ENCODE measurements at regions of chr7 and their contacts with region 1.

Region 1: GRCh38 chr7:139422126-139422525 is 61.3 kb downstream of the KLRG2 start:
- DNase-seq: no peak
- ATAC-seq: peak in 2 of 4 donors; percentile 43 to 51
- H3K4me3 ChIP-seq: no peak overlapping the region
- H3K27ac ChIP-seq: peak overlapping the region in 4 of 12 donors; percentile 17 to 78 (median 29)
- H3K4me1 ChIP-seq: peaks cover 0 to 29% (median 0%) of the 10 kb centered on the region in 12 donors
- H3K27me3 ChIP-seq: no peaks in the 10 kb centered on the region
- CTCF ChIP-seq: no peak
- POLR2A ChIP-seq: no peak

Region 2: GRCh38 chr7:139370301-139370942 is 51.7 kb before region 1 on chr7:
- intact Hi-C with region 1: loop called in 1 of 10 experiments (anchors 5 kb)
- DNase-seq: no peak
- ATAC-seq: peak in 1 of 4 donors; percentile 27
- H3K4me3 ChIP-seq: no peak overlapping the region
- H3K27ac ChIP-seq: no peak overlapping the region
- H3K4me1 ChIP-seq: peaks cover 2 to 97% (median 65%) of the 10 kb centered on the region in 12 donors
- H3K27me3 ChIP-seq: no peaks in the 10 kb centered on the region
- CTCF ChIP-seq: no peak
- POLR2A ChIP-seq: no peak

Region 3: DNA sequence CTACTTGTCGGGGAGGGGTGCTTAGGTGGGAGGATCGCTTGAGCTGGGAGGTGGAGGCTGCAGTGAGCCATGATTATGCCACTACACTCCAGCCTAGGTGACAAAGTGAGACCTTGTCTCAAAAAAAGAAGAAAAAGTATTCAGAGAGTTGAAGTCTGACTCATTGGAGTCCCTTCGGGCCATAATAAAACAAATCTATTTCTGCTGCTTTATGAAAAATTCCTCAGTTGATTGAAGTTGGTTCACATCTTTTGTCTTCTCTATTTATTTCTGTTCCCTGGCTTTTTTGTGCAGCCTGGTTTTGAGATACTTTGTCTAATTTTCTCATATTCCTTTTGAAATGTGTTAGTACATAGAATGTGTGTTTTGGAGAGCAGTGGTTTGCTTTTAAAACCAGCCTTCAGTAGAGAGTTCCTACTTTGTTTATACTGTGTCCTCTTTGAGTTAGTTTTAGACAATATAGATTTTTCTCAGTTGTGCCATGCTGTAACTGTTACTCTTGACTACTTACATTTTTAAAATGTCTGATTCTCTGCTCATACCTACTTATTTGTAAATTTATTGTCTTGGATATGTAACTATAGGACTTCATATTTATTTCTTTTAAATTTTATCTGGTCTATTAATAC is 25.7 kb before region 1 on chr7:
- intact Hi-C with region 1: no loop called
- DNase-seq: no peak
- ATAC-seq: no peak
- H3K4me3 ChIP-seq: no peak overlapping the region
- H3K27ac ChIP-seq: no peak overlapping the region
- H3K4me1 ChIP-seq: peaks cover 0 to 26% (median 2%) of the 10 kb centered on the region in 12 donors
- H3K27me3 ChIP-seq: no peaks in the 10 kb centered on the region
- CTCF ChIP-seq: no peak
- POLR2A ChIP-seq: no peak

Measured in heart left ventricle (tissue), 16 donors.